IMR-90 (cell line): ENCODE measurements at regions of chr3 and their contacts with region 1.

Region 1: GRCh38 chr3:72818092-72818773 is 30.0 kb downstream of the SHQ1 start:
- DNase-seq: peak; percentile 36
- ATAC-seq: peak; percentile 42; the same call in 1 of the 2 replicates
- H3K4me3 ChIP-seq: no peak overlapping the region
- H3K27ac ChIP-seq: no peak overlapping the region; the same call in 1 of the 2 replicates
- H3K4me1 ChIP-seq: peaks cover 7% of the 10 kb centered on the region
- H3K27me3 ChIP-seq: no peaks in the 10 kb centered on the region
- CTCF ChIP-seq: peak; percentile 64
- POLR2A ChIP-seq: no peak
- RAD21 ChIP-seq: peak; percentile 78

Region 2: DNA sequence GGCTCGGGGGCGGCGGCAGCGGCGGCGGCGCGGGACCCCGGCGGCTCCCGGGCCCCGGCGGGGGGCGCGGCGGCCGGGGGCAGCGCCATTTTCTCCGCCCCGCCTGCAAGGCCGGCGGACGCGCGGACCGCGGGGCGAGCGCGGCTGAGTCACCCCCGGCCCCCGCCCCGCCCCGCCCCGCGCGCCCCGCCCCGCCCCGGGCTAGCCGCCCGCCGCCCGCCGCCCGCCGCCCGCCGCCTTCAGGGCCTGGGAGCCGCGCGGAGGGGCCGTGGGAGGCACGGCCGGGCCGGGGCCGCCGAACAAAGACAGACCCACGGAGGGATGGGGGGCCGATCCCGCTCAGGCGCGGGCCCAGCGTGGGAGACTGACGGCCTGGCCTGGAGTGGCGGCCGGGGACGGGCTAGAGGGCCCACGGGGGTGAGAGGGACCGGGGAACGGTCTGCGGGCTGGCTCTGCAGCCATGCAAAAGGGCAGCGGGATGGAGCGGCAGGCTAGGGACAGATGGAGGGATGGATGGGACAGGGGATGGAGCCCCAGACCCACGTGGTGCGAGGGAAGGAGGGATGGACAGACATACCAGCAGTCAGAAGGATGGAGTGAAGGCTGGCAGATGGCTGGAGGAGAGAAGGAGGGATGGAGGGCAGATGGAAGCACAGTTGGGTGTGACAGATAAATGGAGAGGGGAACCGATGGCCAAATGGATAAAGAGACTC is 1092.8 kb before region 1 on chr3 and contains the start of gene EIF4E3:
- CTCF ChIA-PET with region 1: interaction called, 6 read pairs
- POLR2A ChIA-PET with region 1: no interaction called
- dilution Hi-C with region 1: no loop called
- in situ Hi-C with region 1: loop called (anchors 5 kb)
- intact Hi-C with region 1: loop called (anchors 5 kb)
- DNase-seq: peak; percentile 4
- ATAC-seq: peak; percentile 86
- H3K4me3 ChIP-seq: peak within 1 kb of the TSS; percentile 70
- H3K27ac ChIP-seq: no peak within 1 kb of the TSS; the same call in 1 of the 2 replicates
- H3K4me1 ChIP-seq: peaks cover 2% of the 10 kb centered on the region; the same call in 1 of the 2 replicates
- H3K27me3 ChIP-seq: peaks cover 59% of the 10 kb centered on the region
- CTCF ChIP-seq: no peak
- POLR2A ChIP-seq: no peak
- RAD21 ChIP-seq: no peak
- total RNA-seq, gene EIF4E3: 0.72 and 0.83 TPM in 2 replicates

Region 3: GRCh38 chr3:71881044-71881443 is 937.2 kb before region 1 on chr3:
- CTCF ChIA-PET with region 1: interaction called, 14 read pairs
- POLR2A ChIA-PET with region 1: no interaction called
- dilution Hi-C with region 1: no loop called
- in situ Hi-C with region 1: loop called (anchors 5 kb)
- intact Hi-C with region 1: no loop called
- DNase-seq: no peak
- ATAC-seq: no peak
- H3K4me3 ChIP-seq: no peak overlapping the region
- H3K27ac ChIP-seq: no peak overlapping the region
- H3K4me1 ChIP-seq: no peaks in the 10 kb centered on the region
- H3K27me3 ChIP-seq: peaks cover 8% of the 10 kb centered on the region
- CTCF ChIP-seq: no peak
- POLR2A ChIP-seq: no peak
- RAD21 ChIP-seq: no peak

Region 4: GRCh38 chr3:72152551-72153476 is 665.4 kb before region 1 on chr3:
- CTCF ChIA-PET with region 1: interaction called, 5 read pairs
- POLR2A ChIA-PET with region 1: no interaction called
- dilution Hi-C with region 1: no loop called
- in situ Hi-C with region 1: no loop called
- intact Hi-C with region 1: loop called (anchors 10 kb)
- DNase-seq: peak; percentile 69
- ATAC-seq: peak; percentile 40; the same call in 1 of the 2 replicates
- H3K4me3 ChIP-seq: peak overlapping the region; percentile 29
- H3K27ac ChIP-seq: peak overlapping the region; percentile 19; the same call in 1 of the 2 replicates
- H3K4me1 ChIP-seq: peaks cover 1% of the 10 kb centered on the region; the same call in 1 of the 2 replicates
- H3K27me3 ChIP-seq: peaks cover 3% of the 10 kb centered on the region; the same call in 1 of the 2 replicates
- CTCF ChIP-seq: no peak
- POLR2A ChIP-seq: no peak
- RAD21 ChIP-seq: no peak

Region 5: DNA sequence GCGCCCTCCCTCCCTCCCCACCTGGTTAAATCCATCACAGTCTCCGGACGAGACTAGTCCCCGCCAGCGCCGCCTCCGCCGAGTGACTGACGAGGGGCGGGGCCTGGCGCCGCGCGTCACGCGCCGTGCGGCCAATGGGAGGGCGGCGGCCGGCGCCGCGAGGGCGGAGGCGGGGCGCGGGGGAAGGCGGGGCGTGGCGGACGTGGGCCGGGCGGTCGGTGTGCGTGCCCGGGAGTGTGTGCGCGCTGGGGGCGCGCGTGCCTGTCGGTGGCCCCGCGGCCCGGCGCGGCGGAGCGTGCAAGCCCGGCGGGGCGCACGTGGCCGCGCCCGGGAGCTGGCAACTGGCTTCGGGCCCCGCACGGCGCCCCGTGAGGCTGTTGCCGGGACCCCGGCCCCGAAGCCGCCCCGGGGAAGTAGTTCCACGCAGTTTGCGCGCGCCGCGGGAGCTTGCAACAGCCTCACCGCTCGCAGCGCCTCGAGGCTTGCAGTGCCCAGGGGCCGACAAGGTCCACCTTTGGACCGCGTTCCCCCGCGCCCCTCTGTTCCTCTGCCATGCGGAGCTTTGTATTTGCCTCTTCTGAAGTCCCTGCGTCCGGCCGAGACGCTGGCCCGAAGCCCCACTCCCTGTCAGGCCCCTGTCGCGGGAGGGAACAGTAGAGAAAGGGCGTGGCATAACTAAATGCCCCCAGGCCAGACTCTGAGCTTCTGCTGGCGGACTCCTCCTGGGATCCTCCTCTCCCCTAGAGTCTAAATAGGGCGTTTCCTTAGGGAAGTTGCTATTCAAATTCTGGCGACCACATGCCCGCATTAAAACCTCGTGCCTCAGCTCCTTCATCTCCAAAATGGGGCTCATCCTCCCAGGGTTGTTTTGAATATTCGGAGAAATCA is 370.9 kb before region 1 on chr3:
- CTCF ChIA-PET with region 1: no interaction called
- POLR2A ChIA-PET with region 1: no interaction called
- dilution Hi-C with region 1: no loop called
- in situ Hi-C with region 1: no loop called
- intact Hi-C with region 1: loop called (anchors 1 kb)
- DNase-seq: peak; percentile 86
- ATAC-seq: peak; percentile 99
- H3K4me3 ChIP-seq: peak overlapping the region; percentile 98
- H3K27ac ChIP-seq: peak overlapping the region; percentile 84
- H3K4me1 ChIP-seq: peaks cover 2% of the 10 kb centered on the region; the same call in 1 of the 2 replicates
- H3K27me3 ChIP-seq: peaks cover 17% of the 10 kb centered on the region
- CTCF ChIP-seq: no peak
- POLR2A ChIP-seq: 0 out of 2 replicates have a peak, but pooled peaks have one; percentile 25
- RAD21 ChIP-seq: no peak

Region 6: DNA sequence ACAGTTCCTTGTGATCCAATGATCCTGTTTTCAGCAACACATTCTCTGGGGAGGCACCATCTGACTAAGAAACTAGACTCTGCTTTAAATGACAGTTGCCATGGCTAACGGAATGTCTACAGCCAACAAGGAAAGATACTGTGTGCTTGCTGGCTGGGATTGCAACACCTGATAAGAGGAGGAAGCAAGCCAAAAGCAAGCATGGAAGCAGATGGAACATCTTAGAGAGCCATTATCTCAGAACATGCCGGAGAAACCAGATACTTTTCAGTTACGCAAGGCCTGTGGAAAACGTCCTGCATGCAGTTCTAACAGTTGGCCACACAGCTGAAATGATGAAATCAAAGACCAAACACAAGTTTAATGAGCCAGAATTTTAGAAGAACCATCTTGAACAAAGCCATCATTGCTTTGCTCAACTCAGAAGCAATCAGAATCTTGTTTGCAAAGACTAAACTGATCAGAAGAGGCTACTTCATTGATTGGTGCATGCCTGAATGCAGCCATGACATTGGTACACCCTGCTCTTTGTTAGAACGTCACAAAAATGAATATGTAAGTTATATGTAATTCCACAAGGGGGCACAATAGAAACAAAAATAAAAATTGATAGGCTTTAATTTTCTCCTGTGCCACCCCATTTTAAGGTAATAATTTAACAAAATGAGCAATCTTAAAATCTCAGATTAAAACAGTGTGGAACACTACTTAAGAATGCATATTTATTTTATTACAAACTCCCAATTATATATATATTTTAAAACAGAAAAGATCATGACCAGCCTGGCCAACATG is 120.4 kb after region 1 on chr3:
- CTCF ChIA-PET with region 1: no interaction called
- POLR2A ChIA-PET with region 1: no interaction called
- dilution Hi-C with region 1: no loop called
- in situ Hi-C with region 1: no loop called
- intact Hi-C with region 1: no loop called
- DNase-seq: peak; percentile 99
- ATAC-seq: peak; percentile 90
- H3K4me3 ChIP-seq: no peak overlapping the region; the same call in 1 of the 2 replicates
- H3K27ac ChIP-seq: peak overlapping the region; percentile 21; the same call in 1 of the 2 replicates
- H3K4me1 ChIP-seq: peaks cover 2% of the 10 kb centered on the region
- H3K27me3 ChIP-seq: no peaks in the 10 kb centered on the region
- CTCF ChIP-seq: peak; percentile 51
- POLR2A ChIP-seq: no peak
- RAD21 ChIP-seq: peak; percentile 39; the same call in 1 of the 2 replicates